T-cell (primary cell): ENCODE measurements at regions of chr2 and their contacts with region 1.

Region 1: DNA sequence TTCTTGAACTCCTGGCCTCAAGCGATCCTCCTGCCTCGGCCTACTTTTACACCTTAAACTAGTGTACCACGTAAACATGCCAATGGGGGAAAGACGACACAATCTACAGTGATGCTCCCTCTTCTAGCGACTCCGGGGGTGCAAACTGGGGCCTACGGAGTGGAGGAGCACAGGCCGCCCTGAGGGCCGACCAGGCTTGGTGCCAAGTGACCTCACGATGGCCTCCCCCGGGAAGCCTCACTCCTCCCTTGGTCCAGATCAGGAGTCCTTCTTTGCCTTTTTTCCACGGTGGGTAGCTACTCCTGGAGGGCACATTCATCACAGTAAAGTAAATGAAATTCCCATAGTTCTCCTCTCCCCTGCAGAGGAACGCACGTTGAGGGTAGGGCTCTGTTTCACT is 73.5 kb downstream of the HNRNPLL start:
- DNase-seq: no peak
- ATAC-seq: no peak
- H3K4me3 ChIP-seq: no peak overlapping the region
- H3K4me3 Mint-ChIP-seq: no peak overlapping the region
- H3K27ac ChIP-seq: no peak overlapping the region
- H3K27ac Mint-ChIP-seq: no peak overlapping the region
- H3K4me1 ChIP-seq: peaks cover 0 to 2% of the 10 kb centered on the region in 2 experiments
- H3K4me1 Mint-ChIP-seq: peaks cover 3 to 11% (median 8%) of the 10 kb centered on the region in 3 donors
- H3K27me3 ChIP-seq: peaks cover 0 to 30% of the 10 kb centered on the region in 2 experiments
- H3K27me3 Mint-ChIP-seq: peaks cover 22 to 26% of the 10 kb centered on the region in 2 donors

Region 2: GRCh38 chr2:38565333-38565732 is 36.1 kb after region 1 on chr2:
- CTCF ChIA-PET with region 1: interaction called in 1 of 2 experiments, 11 read pairs
- POLR2A ChIA-PET with region 1: no interaction called
- DNase-seq: no peak
- ATAC-seq: no peak
- H3K4me3 ChIP-seq: no peak overlapping the region
- H3K4me3 Mint-ChIP-seq: no peak overlapping the region
- H3K27ac ChIP-seq: no peak overlapping the region
- H3K27ac Mint-ChIP-seq: no peak overlapping the region
- H3K4me1 ChIP-seq: no peaks in the 10 kb centered on the region
- H3K4me1 Mint-ChIP-seq: no peaks in the 10 kb centered on the region
- H3K27me3 ChIP-seq: no peaks in the 10 kb centered on the region
- H3K27me3 Mint-ChIP-seq: no peaks in the 10 kb centered on the region